GM10248 (cell line): ENCODE measurements at regions of chr1 and their contacts with region 1.

Region 1: DNA sequence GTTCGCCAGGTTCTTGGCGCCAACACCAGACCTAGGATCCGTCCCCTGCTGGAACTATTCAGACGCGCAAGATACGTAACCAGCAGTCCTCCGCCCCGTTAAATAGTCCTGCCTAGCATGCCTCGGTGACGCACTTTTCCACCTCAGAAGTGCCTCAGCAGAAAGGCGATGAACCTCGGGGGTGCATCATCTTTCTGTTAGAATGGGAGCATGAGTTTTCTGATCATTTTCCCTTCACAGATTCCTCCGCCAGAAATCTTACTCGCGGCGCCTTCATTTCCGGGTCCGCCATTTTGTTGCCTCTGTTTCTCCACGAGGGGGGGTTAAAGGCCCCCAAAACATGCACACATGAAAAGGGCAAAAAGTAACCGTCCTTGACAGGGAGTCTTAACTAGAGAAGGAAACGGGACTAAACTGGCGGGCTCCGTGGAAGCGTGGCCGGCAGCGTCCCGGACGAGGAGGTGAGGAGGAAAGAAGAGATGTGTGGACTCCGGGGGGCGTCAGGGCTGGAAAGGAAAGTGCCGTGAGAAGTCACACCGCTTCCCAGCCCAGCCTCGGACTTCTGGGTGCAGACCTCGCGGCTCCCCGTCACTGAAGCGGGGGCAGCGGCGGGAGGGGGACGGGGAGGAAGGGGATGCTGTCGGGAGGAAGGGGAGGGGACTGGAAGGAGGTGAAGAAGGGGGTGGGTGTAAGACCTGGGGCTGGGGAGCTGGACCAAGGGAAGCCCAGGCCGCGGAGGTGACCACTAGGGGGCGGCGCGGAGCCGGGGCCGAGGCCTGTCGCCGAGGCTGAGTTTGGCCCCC is at the start of gene GABPB2:
- DNase-seq: peak; percentile 92
- CTCF ChIP-seq: peak; percentile 87

Region 2: DNA sequence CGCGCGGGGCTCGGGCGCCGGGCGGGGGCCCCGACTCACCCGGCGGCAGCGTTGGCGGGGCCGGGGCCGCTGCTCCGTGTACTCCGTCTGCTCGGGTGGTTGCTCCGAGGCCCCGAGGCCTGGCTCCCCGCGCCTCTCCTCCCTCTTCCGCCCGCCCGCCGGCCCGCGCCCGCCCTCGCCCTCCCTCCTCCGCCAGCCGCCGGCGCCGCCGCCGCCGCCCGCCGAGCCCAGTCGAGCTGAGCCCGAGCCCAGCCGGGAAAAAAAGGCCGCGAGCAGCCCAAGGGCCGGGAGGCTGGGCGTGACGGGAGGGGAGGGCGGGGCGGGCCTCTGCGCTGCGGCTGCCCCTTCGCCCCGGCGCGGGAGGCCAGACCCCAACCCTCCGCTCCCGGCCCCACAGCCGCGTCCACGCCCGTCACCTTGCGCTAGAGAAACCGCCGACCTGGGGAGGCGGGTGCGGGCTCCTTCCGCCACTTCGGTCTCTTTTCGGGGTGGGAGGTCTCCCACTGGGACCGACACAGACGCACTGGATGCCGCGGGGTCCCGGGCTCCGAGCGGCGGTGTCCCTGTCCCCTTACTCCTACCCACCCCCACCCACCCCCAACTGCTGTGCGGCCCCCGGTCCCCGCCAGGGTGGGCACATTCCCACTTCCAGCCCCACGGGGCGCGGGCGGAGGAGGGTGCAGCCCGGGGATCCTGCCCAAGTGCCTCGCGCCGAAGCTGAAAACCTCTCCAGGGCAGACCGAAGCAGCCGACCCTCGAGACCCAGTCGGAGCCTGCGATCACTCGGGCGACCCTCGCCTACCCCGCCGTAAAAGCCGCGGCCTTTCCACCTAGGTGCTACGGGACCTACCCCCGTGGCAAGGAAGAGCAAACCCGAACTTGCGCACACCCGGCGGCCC is 95.8 kb before region 1 on chr1 and contains the start of gene CERS2:
- CTCF ChIA-PET with region 1: no interaction called
- POLR2A ChIA-PET with region 1: no interaction called
- DNase-seq: peak; percentile 83
- CTCF ChIP-seq: no peak

Region 3: DNA sequence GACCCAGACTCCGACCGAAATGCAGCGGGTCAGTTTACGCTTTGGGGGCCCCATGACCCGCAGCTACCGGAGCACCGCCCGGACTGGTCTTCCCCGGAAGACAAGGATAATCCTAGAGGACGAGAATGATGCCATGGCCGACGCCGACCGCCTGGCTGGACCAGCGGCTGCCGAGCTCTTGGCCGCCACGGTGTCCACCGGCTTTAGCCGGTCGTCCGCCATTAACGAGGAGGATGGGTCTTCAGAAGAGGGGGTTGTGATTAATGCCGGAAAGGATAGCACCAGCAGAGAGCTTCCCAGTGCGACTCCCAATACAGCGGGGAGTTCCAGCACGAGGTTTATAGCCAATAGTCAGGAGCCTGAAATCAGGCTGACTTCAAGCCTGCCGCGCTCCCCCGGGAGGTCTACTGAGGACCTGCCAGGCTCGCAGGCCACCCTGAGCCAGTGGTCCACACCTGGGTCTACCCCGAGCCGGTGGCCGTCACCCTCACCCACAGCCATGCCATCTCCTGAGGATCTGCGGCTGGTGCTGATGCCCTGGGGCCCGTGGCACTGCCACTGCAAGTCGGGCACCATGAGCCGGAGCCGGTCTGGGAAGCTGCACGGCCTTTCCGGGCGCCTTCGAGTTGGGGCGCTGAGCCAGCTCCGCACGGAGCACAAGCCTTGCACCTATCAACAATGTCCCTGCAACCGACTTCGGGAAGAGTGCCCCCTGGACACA is 22.6 kb before region 1 on chr1:
- CTCF ChIA-PET with region 1: interaction called, 16 read pairs
- POLR2A ChIA-PET with region 1: interaction called, 4 read pairs
- DNase-seq: peak; percentile 78
- CTCF ChIP-seq: peak; percentile 49

Region 4: DNA sequence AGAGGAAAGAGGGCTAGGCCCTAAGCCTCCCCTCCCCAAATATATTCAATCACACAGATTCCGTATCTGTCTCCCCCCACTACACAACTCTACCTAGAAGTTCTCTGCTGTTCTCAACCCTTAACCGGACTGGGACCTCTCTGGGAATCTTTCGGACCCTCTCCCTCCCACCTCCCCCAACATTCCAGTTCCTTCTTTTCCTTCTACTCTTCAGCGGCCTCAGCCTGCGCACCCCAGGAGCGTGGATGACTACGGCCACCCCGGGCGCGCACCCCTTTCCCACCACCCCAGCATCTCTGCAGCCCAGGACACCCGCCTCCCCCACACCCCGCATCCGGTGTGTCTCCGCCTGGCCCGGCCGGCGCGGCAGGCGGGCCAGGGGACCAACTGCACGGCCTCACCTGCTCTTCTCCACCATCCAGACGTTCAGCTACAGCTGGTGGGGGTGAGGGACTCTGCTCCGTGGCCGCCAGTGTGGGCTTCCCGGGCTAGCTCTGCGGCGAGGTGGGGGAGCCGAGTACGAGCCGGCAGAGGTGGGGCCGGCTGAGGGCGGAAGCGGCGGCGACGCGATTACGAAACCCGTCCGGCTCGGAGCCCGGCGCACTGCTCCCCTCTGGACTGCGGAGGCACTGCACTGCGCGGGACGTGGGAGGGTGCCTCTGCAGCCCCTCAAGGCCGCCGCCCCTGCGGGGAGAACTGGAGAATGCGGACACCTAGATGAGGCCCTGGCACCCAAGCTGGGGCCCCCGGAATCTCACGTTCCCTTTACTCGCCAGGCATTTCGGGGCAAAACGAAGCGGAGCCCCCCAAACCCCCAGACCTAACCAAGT is 11.4 kb before region 1 on chr1 and contains the start of gene CDC42SE1:
- CTCF ChIA-PET with region 1: interaction called, 52 read pairs
- POLR2A ChIA-PET with region 1: interaction called, 3 read pairs
- DNase-seq: peak; percentile 92
- CTCF ChIP-seq: peak; percentile 75

Region 5: DNA sequence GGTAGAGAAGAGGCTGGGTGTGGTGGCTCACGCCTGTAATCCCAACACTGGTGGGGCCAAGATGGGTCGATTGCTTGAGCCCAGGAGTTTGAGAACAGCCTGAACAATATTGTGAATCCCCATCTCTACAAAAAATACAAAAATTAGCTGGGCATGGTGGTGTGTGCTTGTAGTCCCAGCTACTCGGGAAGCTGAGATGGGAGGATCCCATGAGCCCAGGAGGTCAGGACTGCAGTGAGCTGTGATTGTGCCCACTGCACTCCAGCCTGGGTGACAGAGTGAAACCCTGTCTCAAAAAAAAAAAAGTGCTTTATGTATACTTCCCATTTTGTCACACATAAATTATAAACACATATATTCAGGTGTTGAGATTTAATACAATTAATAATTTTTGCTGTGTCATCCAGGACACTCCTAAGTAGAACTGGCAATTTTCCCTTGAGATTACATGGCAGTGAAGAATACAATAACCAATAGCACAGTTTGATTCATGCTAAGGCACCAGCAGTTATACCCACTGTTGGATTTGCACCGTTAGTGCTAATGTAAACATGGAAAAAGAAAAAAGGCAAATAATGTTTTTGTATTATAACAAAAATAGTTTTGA is 15.4 kb after region 1 on chr1:
- CTCF ChIA-PET with region 1: interaction called, 11 read pairs
- POLR2A ChIA-PET with region 1: interaction called, 3 read pairs
- DNase-seq: no peak
- CTCF ChIP-seq: no peak

Region 6: GRCh38 chr1:151098126-151098525 is 27.5 kb after region 1 on chr1:
- CTCF ChIA-PET with region 1: interaction called, 16 read pairs
- POLR2A ChIA-PET with region 1: interaction called, 5 read pairs
- DNase-seq: no peak
- CTCF ChIP-seq: no peak

Region 7: DNA sequence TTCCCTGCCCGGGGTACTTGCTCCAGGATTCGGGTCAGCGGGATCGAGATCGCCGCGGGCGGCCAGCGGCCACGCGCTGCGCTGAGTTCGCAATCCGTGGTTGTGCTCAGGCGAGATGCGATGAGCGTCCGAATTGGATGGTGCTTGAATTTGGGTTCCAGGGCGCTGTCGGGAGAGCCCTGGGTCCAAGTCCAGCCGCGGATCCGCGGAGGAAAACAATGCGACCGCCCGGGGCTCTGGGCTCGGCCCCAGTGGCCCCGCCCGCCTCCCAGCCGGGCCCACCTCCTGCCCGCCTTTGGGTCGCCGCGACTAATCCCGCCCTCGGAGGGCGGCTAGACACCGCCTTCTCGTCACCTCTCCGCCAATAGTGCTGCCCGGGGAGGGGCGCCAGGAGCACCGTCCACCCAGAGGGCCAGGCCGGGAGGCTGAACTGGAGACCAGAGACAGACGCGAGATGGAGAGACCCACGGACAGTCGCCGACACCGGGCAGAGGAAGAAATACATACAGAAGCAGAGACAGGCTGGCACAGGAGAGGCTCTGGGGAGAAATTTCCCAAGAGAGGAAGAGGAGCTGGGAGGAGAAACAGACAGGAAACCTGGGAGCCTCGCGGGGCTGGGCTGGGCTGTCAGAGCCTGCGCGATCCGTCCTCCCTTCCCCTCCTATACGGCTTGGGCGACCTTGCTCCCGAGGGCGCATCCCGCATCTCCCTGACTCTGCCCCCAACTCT is 75.9 kb after region 1 on chr1 and contains the start of gene SEMA6C:
- CTCF ChIA-PET with region 1: interaction called, 10 read pairs
- POLR2A ChIA-PET with region 1: no interaction called
- DNase-seq: peak; percentile 94
- CTCF ChIP-seq: no peak

Region 8: DNA sequence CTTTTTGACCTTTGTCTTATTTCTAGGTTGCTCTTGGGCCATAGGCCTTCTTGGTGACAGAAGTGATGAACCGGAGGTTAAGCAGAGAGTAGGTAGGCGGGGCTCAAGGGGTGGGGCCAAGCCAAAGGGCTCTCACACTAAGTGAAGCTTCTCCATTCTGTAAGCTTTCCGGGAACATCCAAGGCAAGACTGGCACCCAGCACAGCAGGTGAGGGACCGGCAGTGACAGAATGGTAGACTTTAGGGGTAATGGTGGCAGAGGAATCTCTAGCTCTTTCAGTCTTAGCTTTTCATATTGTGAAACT is 85.8 kb after region 1 on chr1 and contains the start of gene TNFAIP8L2:
- CTCF ChIA-PET with region 1: interaction called, 20 read pairs
- POLR2A ChIA-PET with region 1: no interaction called
- DNase-seq: peak; percentile 73
- CTCF ChIP-seq: no peak

Region 9: GRCh38 chr1:151166506-151167100 is 95.9 kb after region 1 on chr1:
- CTCF ChIA-PET with region 1: no interaction called
- POLR2A ChIA-PET with region 1: no interaction called
- DNase-seq: no peak
- CTCF ChIP-seq: no peak